Activated CD4-positive, alpha-beta T cell treated with anti-CD3 and anti-CD28 coated beads for 36 hours (primary cell): ENCODE measurements at regions of chr17 and their contacts with region 1.

Region 1: DNA sequence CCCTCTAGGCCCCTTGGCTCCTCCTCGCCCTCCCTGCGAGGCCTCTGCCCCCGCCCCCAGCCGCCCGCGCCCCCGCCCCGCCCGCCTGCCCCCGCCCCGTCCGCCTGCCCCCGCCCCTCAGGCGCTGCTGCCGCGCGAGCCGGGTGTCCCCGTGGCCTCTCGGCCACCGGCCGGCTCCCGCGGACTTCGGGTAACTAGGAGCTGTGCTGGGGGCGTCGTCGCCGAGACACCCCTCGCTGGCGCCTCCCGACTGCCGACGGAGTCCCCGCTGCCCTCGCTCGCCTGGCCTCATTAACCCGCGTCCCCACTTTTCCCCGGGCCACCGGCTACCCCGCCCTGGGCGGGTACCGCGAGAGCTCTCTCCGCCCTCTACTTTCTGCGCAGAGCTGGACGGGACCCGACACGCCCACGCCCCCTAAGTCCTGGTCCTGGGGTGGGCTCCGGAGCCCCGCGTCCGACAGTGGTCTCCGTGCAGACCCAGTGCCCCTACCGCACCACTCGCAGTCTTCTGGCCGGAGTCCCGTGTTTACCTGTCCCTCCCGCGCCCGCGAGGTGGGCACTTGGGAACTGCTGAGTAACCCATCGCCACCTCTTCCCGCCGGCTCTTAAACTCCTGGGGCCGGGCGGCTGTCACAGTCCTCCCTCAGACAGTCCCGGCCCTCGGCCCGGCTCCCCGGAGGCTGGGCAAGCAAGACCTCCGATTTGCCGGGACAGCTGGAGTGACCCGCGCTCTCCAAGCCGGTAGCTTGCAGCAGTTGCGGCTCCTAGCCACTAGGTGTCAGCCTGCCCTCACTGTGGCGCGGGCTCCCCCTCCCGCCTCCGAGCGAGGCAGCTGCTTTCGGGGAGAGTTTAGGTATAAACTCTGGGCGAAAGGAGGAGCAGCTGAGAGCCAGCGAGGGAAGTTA is at the start of gene TLCD1:
- DNase-seq: peak; percentile 97
- ATAC-seq: peak; percentile 35
- H3K4me3 Mint-ChIP-seq: peak within 1 kb of the TSS; percentile 99
- H3K27ac Mint-ChIP-seq: peak within 1 kb of the TSS; percentile 99
- H3K4me1 Mint-ChIP-seq: peaks cover 52% of the 10 kb centered on the region
- H3K27me3 Mint-ChIP-seq: no peaks in the 10 kb centered on the region
- total RNA-seq, gene TLCD1: 8.5 to 8.7 TPM

Region 2: DNA sequence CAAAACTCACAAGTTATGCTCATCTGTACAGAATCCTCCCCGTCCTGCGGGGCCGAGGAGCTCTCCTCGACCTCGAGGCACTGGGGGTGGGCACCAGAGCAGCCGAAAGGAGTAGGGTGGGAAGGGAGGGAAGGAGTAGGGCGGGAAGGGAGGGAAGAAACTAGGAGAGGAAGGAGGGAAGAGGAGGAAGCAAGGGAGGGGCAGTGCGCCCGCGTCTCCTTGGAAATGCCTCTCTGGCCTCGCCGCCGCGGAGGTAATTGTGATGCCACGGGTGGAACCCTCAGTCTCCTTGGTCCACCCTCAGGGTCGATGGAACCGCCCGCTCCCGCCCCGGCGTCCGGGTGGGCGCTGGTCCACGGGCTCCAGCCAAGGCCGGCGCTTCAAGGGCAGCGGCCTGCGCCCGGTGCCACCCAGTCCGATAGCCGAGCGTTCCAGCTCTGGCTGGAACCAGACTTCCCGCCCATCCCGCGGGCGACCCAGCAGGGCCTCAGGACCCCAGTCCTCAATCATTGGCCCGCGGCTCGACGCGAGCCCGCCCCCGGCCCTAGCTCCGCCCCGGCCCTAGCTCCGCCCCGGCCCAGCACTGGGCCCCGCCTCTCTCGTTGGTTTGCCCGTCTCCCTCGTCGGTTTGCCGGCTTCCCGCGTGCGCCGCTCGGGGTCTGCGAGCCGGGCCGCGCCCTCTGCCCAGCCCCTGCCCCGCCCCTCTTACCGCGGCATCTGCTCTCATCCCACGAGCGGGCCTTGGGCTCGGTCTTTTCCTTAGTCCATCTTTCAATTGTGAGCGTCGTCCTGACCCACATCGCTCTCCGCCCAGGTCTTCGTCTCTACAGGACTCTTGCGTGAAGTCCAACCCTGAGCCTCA is 15.4 kb before region 1 on chr17:
- CTCF ChIA-PET with region 1: interaction called, 19 read pairs
- POLR2A ChIA-PET with region 1: interaction called, 31 read pairs
- intact Hi-C with region 1: no loop called
- DNase-seq: peak; percentile 94
- ATAC-seq: peak; percentile 90
- H3K4me3 Mint-ChIP-seq: peak overlapping the region; percentile 80
- H3K27ac Mint-ChIP-seq: peak overlapping the region; percentile 91
- H3K4me1 Mint-ChIP-seq: peaks cover 19% of the 10 kb centered on the region
- H3K27me3 Mint-ChIP-seq: peaks cover 17% of the 10 kb centered on the region

Region 3: GRCh38 chr17:28763804-28764266 is 37.4 kb after region 1 on chr17:
- CTCF ChIA-PET with region 1: interaction called, 43 read pairs
- POLR2A ChIA-PET with region 1: interaction called, 5 read pairs
- intact Hi-C with region 1: loop called (anchors 1 to 5 kb)
- DNase-seq: peak; percentile 87
- ATAC-seq: peak; percentile 63
- H3K4me3 Mint-ChIP-seq: no peak overlapping the region
- H3K27ac Mint-ChIP-seq: peak overlapping the region; percentile 80
- H3K4me1 Mint-ChIP-seq: peaks cover 25% of the 10 kb centered on the region
- H3K27me3 Mint-ChIP-seq: no peaks in the 10 kb centered on the region

Region 4: GRCh38 chr17:28854457-28855350 is 128.2 kb after region 1 on chr17 and contains the start of gene ERAL1:
- CTCF ChIA-PET with region 1: interaction called, 8 read pairs
- POLR2A ChIA-PET with region 1: no interaction called
- intact Hi-C with region 1: loop called (anchors 1 to 5 kb)
- DNase-seq: peak; percentile 93
- ATAC-seq: peak; percentile 100
- H3K4me3 Mint-ChIP-seq: peak within 1 kb of the TSS; percentile 80
- H3K27ac Mint-ChIP-seq: peak within 1 kb of the TSS; percentile 81
- H3K4me1 Mint-ChIP-seq: peaks cover 24% of the 10 kb centered on the region
- H3K27me3 Mint-ChIP-seq: no peaks in the 10 kb centered on the region
- total RNA-seq, gene ERAL1: 51.5 to 74.8 TPM

Region 5: DNA sequence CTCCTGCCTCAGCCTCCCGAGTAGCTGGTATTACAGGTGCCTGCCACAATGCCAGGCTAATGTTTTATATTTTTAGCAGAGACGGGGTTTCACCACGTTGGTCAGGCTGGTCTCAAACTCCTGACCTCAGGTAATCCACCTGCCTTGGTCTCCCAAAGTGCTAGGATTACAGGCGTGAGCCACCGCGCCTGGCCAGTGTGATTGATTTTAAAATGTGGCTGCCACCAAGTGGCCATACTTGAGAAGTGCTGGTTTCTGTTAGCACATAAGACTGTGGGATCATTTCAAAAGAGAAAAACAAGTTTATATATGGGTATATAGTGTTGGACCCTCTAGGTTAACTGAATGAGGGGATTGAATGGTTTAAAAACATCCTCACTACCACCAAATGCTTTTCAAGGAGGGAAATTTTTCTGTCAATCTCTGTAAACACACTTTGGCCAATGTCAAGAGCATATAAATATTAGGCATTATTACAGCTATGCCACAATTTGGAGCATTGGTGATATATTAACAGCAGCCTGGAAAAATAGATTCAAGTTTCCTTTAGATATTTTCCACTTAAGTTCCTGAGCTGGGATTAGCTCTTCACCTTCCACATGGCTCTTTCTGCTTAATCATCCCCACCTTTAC is 189.9 kb after region 1 on chr17:
- CTCF ChIA-PET with region 1: interaction called, 14 read pairs
- POLR2A ChIA-PET with region 1: interaction called, 3 read pairs
- intact Hi-C with region 1: loop called in 1 of 2 experiments (anchors 1 kb)
- DNase-seq: peak; percentile 66
- ATAC-seq: peak; percentile 70
- H3K4me3 Mint-ChIP-seq: no peak overlapping the region
- H3K27ac Mint-ChIP-seq: no peak overlapping the region
- H3K4me1 Mint-ChIP-seq: peaks cover 14% of the 10 kb centered on the region
- H3K27me3 Mint-ChIP-seq: no peaks in the 10 kb centered on the region

Region 6: DNA sequence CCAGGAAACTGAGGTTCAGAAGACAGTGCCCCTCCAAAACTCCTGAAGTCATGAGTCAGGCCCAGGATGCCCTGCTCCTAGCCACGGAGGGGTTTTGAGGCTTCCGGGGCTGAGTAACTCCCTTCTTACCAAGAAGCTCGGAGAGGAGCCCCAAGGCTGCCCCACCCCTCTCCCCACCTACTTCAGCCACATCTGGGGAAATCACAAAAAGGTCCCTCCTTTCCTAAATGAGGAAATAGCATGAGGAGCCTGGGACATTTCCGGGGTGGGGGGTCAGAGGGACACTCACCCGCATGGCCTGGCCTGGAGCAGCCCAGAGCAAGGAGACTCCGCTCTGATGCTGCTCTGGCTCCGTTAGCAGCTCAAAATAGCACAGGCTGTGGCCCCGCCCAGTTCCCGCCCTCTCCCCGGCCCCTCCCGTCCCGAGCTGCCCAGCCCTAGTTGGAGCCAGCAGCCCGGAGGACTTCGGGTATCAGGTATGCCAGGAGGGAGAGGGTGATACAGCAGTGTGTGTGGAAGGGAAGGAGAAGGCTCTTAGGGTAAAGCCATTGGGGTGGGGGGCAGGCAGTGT is 413.7 kb after region 1 on chr17:
- CTCF ChIA-PET with region 1: interaction called, 3 read pairs
- POLR2A ChIA-PET with region 1: no interaction called
- intact Hi-C with region 1: loop called in 1 of 2 experiments (anchors 2 kb)
- DNase-seq: peak; percentile 92
- ATAC-seq: peak; percentile 60
- H3K4me3 Mint-ChIP-seq: peak overlapping the region; percentile 89
- H3K27ac Mint-ChIP-seq: peak overlapping the region; percentile 97
- H3K4me1 Mint-ChIP-seq: peaks cover 74% of the 10 kb centered on the region
- H3K27me3 Mint-ChIP-seq: no peaks in the 10 kb centered on the region